Esophagus muscularis mucosa (tissue), 4 donors: ENCODE measurements at regions of chr17 and their contacts with region 1.

Region 1: GRCh38 chr17:42019509-42020404 is at the start of gene NKIRAS2:
- DNase-seq: peak; percentile 97
- H3K4me3 ChIP-seq: peak within 1 kb of the TSS; percentile 71 to 86 (median 76)
- H3K27ac ChIP-seq: peak within 1 kb of the TSS; percentile 81 to 87 (median 86)
- H3K4me1 ChIP-seq: peaks cover 45 to 66% (median 56%) of the 10 kb centered on the region in 4 donors
- H3K27me3 ChIP-seq: no peaks in the 10 kb centered on the region
- CTCF ChIP-seq: peak; percentile 98 to 99 (median 99)
- EP300 ChIP-seq: no peak
- POLR2A ChIP-seq: no peak
- total RNA-seq, gene NKIRAS2: 44.0 to 74.3 (median 59.0) TPM

Region 2: DNA sequence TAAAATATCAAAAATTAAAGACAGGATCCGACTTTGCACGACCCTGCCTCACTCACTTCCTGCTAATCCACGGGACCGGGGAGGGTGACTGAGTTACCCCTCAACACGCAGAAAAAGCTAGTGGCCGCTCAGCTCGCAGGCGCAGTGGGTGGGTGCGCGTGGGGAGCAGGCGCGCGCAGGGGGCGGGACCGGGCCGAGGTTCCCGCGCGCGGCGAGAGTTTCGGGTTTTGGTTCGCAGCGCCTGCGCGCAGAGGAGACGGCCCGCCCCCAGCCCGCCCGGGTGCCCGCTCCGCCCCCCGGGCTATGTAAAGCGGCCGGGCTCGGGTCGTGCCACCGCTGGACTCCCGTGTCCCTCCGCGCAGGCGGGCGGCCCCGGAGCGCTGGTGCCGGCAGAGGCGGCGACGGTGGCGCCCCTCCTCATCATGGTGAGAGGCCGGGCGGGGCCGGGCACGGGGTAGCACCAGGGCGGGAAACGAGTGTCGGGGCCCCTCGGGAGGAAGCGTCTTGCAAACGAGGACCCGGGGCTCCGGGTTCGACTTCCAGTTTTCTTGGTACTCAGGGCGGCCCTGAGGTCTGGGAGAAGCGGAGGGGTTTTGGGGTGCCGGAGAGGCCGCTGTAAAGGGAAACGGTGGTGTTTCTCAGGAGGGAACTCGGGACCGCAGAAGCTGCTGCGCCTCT is 53.2 kb before region 1 on chr17 and contains the start of gene CNP:
- intact Hi-C with region 1: loop called (anchors 2 kb)
- DNase-seq: peak; percentile 95
- H3K4me3 ChIP-seq: peak within 1 kb of the TSS; percentile 91 to 99 (median 95)
- H3K27ac ChIP-seq: peak within 1 kb of the TSS; percentile 92 to 93 (median 92)
- H3K4me1 ChIP-seq: peaks cover 23 to 66% (median 63%) of the 10 kb centered on the region in 4 donors
- H3K27me3 ChIP-seq: no peaks in the 10 kb centered on the region
- CTCF ChIP-seq: peak in 1 of 3 experiments; percentile 27
- EP300 ChIP-seq: no peak
- POLR2A ChIP-seq: peak; percentile 57
- total RNA-seq, gene CNP: 68.9 to 101 (median 78.5) TPM